ENCODE measurements at regions of chr6 and their contacts with region 1.

Region 1: GRCh38 chr6:117449549-117450439 is 24.1 kb upstream of the ROS1 start:
- DNase-seq: peak; percentile 21
- CTCF ChIP-seq: peak; percentile 55

Region 2: DNA sequence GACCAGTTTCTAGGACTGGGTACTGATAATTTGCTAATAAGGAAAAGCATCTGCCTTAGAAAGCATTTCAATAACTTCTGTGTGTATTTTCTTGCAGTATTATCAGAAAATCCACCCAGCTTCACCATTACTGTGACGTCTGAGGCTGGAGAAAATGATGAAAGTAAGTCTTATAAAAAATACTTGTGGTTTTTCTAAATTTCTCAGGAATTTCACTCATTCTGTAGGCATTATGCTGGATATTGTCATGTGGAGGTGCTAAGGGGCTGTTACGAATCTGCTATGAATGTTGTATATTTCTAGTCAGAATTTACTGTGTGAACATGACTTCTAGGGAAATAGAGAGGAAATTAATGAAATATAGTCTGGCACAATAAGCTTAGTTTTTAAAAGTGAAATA is 869.6 kb before region 1 on chr6:
- CTCF ChIA-PET with region 1: no interaction called
- POLR2A ChIA-PET with region 1: no interaction called
- DNase-seq: no peak
- CTCF ChIP-seq: no peak

Region 3: DNA sequence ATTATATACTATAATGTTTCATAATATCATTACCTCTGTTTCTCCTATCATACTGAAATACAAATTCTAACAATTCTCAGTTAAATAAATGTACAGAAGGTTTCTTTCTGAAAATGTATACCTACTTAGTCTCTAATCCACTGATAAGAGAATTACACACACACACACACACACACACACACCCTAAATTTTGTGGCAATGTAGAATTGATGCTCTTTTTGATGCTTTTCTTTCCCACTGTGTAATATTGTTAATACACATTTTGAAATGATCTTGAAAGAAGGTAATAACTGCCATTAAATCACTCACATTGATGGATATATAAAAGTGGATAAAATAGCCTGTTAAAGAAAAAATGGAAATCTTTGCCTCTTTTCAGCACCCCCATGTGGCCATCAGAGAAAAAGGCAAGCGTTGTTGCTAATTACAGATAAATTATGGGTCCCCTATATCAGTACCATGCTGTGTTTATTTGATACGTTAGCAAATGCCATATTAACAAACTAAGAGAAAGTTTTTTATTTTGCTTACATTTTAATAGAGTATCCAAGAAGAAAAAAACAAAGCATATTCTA is 261.1 kb before region 1 on chr6:
- CTCF ChIA-PET with region 1: no interaction called
- POLR2A ChIA-PET with region 1: no interaction called
- DNase-seq: no peak
- CTCF ChIP-seq: peak; percentile 35

Region 4: GRCh38 chr6:117425431-117426153 is 24.2 kb before region 1 on chr6 and contains the start of gene ROS1:
- CTCF ChIA-PET with region 1: no interaction called
- POLR2A ChIA-PET with region 1: no interaction called
- DNase-seq: no peak
- CTCF ChIP-seq: no peak

Region 5: DNA sequence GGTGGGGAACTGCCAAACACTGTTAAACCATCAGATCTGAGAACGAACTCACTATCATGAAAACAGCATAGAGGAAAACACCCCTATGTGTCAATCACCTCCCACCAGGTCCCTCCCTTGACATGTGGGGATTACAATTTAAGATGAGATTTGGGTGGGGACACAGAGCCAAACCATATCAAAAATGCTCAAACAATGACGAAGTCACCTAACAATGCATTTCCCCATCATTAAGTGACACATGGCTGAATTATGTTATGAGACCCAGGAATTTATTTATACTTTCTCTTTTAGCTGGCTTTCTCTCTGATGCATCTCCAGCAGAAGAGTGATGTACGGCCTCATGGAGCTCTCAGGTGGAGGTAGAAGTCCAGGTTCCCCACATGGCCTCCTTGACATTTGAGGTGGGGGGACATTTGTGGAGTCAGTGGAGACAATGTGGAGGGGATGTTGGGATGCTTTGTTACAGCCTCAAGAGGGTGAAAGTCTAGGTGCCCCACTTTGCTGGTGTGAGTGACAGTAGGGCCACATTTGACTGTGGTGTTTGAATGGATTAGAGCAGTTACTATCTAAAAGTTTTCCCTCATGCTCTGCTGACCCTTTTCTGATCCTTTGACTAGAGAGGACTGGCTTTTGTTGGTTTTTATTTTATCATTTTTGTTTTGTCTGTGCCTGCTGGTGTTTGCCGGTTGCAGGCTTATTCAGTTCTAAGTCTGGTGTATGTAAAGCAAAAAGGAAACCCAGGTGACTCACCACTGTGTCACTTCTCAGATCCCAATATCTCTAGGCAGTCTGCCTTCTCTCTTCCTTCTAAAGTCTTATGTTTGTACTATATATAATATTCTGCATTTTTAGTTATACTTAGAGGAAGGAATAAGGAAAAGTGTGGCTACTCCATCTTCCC is 14.2 kb after region 1 on chr6:
- CTCF ChIA-PET with region 1: interaction called, 11 read pairs
- POLR2A ChIA-PET with region 1: no interaction called
- DNase-seq: no peak
- CTCF ChIP-seq: no peak

Region 6: DNA sequence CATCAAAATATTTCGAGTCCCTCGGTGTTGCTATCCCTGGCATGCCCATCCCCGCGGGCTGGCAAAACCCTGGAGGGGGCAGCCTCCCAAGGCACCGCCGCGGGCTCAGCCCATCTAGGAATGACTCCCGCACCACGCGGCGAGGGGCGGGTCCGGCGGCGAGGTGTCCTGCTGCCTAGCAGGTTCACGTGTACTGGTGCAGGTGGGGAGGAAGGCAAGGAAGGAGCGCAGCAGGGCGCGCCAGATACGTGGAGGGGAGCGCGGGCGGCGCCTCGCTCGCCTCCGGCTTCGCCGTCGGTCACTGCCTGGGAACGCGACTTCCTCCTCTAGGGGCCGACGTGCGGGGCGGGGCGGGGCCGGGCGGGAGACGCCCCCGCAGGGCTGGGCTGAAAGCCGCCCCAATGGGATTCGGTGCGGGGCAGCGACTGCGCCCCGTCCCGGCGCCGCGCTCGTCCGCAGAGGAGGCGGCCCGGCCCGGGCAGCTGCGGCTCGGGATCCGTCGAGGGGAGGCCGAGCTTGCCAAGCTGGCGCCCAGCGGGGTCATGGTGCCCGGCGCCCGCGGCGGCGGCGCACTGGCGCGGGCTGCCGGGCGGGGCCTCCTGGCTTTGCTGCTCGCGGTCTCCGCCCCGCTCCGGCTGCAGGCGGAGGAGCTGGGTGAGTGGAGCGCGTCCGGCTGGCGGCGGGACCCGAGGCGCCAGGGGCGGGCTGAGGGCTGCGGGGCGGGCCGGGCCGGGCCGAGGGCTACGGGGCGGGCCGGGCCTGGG is 32.6 kb after region 1 on chr6 and contains the start of gene DCBLD1:
- CTCF ChIA-PET with region 1: interaction called, 21 read pairs
- POLR2A ChIA-PET with region 1: no interaction called
- DNase-seq: peak; percentile 84
- CTCF ChIP-seq: no peak

Region 7: DNA sequence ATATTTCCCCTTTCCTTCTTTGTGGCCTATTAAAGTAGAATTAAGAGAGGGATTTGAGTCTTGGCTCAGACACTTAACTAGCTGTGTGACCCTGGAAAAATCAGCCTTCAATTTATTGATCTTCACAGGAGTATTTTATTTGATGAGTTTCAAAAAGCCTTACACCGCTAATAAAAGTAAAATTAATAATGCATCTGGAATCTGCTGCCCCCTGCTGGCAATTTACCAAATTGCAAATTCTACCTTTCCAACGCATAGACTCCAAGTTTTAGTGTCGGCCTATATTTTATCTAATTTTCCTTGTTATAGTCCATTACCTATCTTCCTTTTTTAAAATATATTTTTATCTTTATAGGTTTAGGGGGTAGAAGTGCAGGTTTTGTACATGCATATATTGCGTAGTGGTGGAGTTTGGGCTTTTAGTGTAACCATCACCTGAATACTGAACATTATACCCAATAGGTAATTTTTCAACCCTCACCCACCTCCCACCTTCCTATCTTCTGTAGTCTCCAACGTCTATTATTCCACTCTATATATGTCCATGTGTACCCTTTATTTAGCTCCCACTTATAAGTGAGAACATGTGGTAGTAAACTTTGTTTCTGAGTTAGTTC is 106.2 kb after region 1 on chr6:
- CTCF ChIA-PET with region 1: interaction called, 52 read pairs
- POLR2A ChIA-PET with region 1: no interaction called
- DNase-seq: no peak
- CTCF ChIP-seq: peak; percentile 69

Region 8: GRCh38 chr6:117829594-117830319 is 380.0 kb after region 1 on chr6:
- CTCF ChIA-PET with region 1: interaction called, 19 read pairs
- POLR2A ChIA-PET with region 1: no interaction called
- DNase-seq: peak; percentile 37
- CTCF ChIP-seq: peak; percentile 28

Measured in GM10248 (cell line).